ENCODE measurements at regions of chr6 and their contacts with region 1.

Region 1: GRCh38 chr6:25441663-25442270 is 162.6 kb downstream of the CARMIL1 start:
- DNase-seq: peak in 3 of 9 experiments; percentile 32 to 64 (median 33)
- ATAC-seq: peak; percentile 91
- H3K4me3 ChIP-seq: no peak overlapping the region
- H3K4me3 Mint-ChIP-seq: no peak overlapping the region
- H3K27ac ChIP-seq: peak overlapping the region; percentile 44 to 55
- H3K27ac Mint-ChIP-seq: peak overlapping the region; percentile 93
- H3K4me1 ChIP-seq: peaks cover 24% of the 10 kb centered on the region
- H3K4me1 Mint-ChIP-seq: peaks cover 32% of the 10 kb centered on the region
- H3K27me3 ChIP-seq: no peaks in the 10 kb centered on the region
- H3K27me3 Mint-ChIP-seq: no peaks in the 10 kb centered on the region
- CTCF ChIP-seq: no peak

Region 2: DNA sequence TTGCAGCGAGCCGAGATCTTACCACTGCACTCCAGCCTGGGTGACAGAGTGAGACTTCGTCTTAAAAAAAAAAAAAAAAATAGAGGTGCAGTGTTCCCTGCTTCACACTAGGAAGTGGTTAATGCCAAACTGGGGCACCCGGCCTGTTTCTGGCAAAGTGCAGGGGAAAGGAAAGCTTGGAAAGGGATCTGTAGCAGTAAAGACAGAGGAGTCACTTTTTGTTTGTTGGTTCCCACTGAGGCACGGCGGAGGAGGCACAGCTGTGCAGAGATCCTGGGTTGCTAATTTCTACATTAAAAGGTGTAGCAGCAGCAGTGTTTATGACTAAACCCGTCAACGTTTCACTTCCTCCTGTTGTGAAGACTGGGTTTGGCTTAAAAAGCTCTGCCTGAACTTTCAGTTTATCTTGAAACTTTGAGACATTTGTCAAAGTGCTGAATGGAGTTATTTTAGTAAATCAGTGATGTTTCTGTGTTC is 37.0 kb before region 1 on chr6:
- CTCF ChIA-PET with region 1: interaction called, 3 read pairs
- POLR2A ChIA-PET with region 1: interaction called, 8 read pairs
- intact Hi-C with region 1: loop called in 1 of 2 experiments (anchors 1 kb)
- DNase-seq: peak; percentile 2 to 77 (median 33)
- ATAC-seq: peak; percentile 89
- H3K4me3 ChIP-seq: peak overlapping the region; percentile 38
- H3K4me3 Mint-ChIP-seq: no peak overlapping the region
- H3K27ac ChIP-seq: peak overlapping the region; percentile 55 to 67
- H3K27ac Mint-ChIP-seq: no peak overlapping the region
- H3K4me1 ChIP-seq: peaks cover 36% of the 10 kb centered on the region
- H3K4me1 Mint-ChIP-seq: peaks cover 29% of the 10 kb centered on the region
- H3K27me3 ChIP-seq: no peaks in the 10 kb centered on the region
- H3K27me3 Mint-ChIP-seq: no peaks in the 10 kb centered on the region
- CTCF ChIP-seq: no peak

Region 3: DNA sequence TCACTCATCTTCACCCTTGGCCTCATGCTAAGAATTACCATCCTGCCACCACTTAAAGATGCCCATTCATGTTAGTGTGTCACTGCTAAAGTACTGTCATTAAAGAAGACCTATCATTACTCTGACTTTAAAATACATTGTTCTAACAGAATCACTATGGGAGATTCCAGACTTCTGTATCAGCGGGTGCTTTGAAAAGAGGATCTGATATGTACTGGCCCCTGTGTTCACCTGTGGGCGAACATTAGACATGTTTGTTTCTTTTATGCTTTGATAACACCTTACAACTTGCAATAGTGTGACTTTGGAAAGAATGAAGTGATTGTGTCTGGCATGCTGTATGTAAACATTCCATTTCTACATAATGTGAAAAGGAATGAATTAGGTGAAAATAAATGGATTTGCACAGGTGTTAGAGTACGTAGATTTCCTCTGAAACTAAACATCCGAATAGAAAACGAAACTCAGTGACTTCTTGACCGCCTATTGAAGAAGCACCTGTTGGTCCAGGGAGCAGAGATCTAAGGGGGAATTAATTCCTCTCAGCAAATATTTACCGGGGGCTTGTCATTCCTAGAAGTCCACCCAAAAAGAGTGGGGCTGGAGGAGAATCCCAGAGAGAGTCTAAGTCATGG is 30.3 kb before region 1 on chr6:
- CTCF ChIA-PET with region 1: interaction called, 3 read pairs
- POLR2A ChIA-PET with region 1: interaction called, 3 read pairs
- intact Hi-C with region 1: loop called in 1 of 2 experiments (anchors 1 kb)
- DNase-seq: no peak
- ATAC-seq: no peak
- H3K4me3 ChIP-seq: no peak overlapping the region
- H3K4me3 Mint-ChIP-seq: no peak overlapping the region
- H3K27ac ChIP-seq: no peak overlapping the region
- H3K27ac Mint-ChIP-seq: no peak overlapping the region
- H3K4me1 ChIP-seq: peaks cover 46% of the 10 kb centered on the region
- H3K4me1 Mint-ChIP-seq: peaks cover 53% of the 10 kb centered on the region
- H3K27me3 ChIP-seq: no peaks in the 10 kb centered on the region
- H3K27me3 Mint-ChIP-seq: no peaks in the 10 kb centered on the region
- CTCF ChIP-seq: no peak

Measured in CD8-positive, alpha-beta T cell (primary cell).